K562 (cell line): ENCODE measurements at regions of chr1 and their contacts with region 1.

Region 1: GRCh38 chr1:158002022-158002630 is 8.7 kb downstream of the KIRREL1 start:
- DNase-seq: no peak
- ATAC-seq: no peak
- H3K4me3 ChIP-seq: no peak overlapping the region
- H3K27ac ChIP-seq: no peak overlapping the region
- H3K4me1 ChIP-seq: no peaks in the 10 kb centered on the region
- H3K27me3 ChIP-seq: peaks cover 0 to 10% of the 10 kb centered on the region in 2 experiments; a peak in 3 of 5 replicates
- CTCF ChIP-seq: no peak
- EP300 ChIP-seq: no peak
- POLR2A ChIP-seq: no peak
- RAD21 ChIP-seq: no peak

Region 2: GRCh38 chr1:157849229-157849875 is 152.8 kb before region 1 on chr1:
- CTCF ChIA-PET with region 1: no interaction called
- POLR2A ChIA-PET with region 1: no interaction called
- in situ Hi-C with region 1: no loop called
- intact Hi-C with region 1: no loop called
- DNase-seq: no peak
- ATAC-seq: no peak
- H3K4me3 ChIP-seq: no peak overlapping the region
- H3K27ac ChIP-seq: no peak overlapping the region
- H3K4me1 ChIP-seq: no peaks in the 10 kb centered on the region
- H3K27me3 ChIP-seq: no peaks in the 10 kb centered on the region
- CTCF ChIP-seq: no peak
- EP300 ChIP-seq: no peak
- POLR2A ChIP-seq: no peak
- RAD21 ChIP-seq: no peak

Region 3: GRCh38 chr1:158095737-158096335 is 93.7 kb after region 1 on chr1:
- CTCF ChIA-PET with region 1: no interaction called
- POLR2A ChIA-PET with region 1: no interaction called
- in situ Hi-C with region 1: loop called (anchors 10 kb)
- intact Hi-C with region 1: no loop called
- DNase-seq: peak; percentile 51 to 75 (median 72)
- ATAC-seq: peak; percentile 97
- H3K4me3 ChIP-seq: no peak overlapping the region
- H3K27ac ChIP-seq: no peak overlapping the region
- H3K4me1 ChIP-seq: no peaks in the 10 kb centered on the region
- H3K27me3 ChIP-seq: peaks cover 14 to 43% of the 10 kb centered on the region in 2 experiments; a peak in 4 of 5 replicates
- CTCF ChIP-seq: peak; percentile 74 to 81 (median 78)
- EP300 ChIP-seq: no peak
- POLR2A ChIP-seq: no peak
- RAD21 ChIP-seq: peak; percentile 47 to 61